Endothelial cell of umbilical vein (primary cell): ENCODE measurements at regions of chr7 and their contacts with region 1.

Region 1: GRCh38 chr7:7640221-7641128 is at the start of gene UMAD1:
- DNase-seq: peak; percentile 98
- H3K4me3 ChIP-seq: peak within 1 kb of the TSS; percentile 66 to 93 (median 79)
- H3K27ac ChIP-seq: peak within 1 kb of the TSS; percentile 21
- H3K4me1 ChIP-seq: peaks cover 8% of the 10 kb centered on the region
- H3K27me3 ChIP-seq: no peaks in the 10 kb centered on the region
- CTCF ChIP-seq: no peak
- POLR2A ChIP-seq: peak; percentile 78
- total RNA-seq, gene UMAD1: 6.1 and 6.6 TPM in 2 replicates

Region 2: GRCh38 chr7:7566651-7567611 is 73.5 kb before region 1 on chr7 and contains the start of gene MIOS:
- CTCF ChIA-PET with region 1: no interaction called
- POLR2A ChIA-PET with region 1: no interaction called
- dilution Hi-C with region 1: no loop called
- intact Hi-C with region 1: loop called (anchors 1 kb)
- DNase-seq: peak; percentile 75
- H3K4me3 ChIP-seq: peak within 1 kb of the TSS; percentile 86 to 95 (median 91)
- H3K27ac ChIP-seq: peak within 1 kb of the TSS; percentile 85
- H3K4me1 ChIP-seq: peaks cover 10% of the 10 kb centered on the region
- H3K27me3 ChIP-seq: no peaks in the 10 kb centered on the region
- CTCF ChIP-seq: no peak
- POLR2A ChIP-seq: peak; percentile 72
- total RNA-seq, gene MIOS: 16.0 and 16.8 TPM in 2 replicates

Region 3: DNA sequence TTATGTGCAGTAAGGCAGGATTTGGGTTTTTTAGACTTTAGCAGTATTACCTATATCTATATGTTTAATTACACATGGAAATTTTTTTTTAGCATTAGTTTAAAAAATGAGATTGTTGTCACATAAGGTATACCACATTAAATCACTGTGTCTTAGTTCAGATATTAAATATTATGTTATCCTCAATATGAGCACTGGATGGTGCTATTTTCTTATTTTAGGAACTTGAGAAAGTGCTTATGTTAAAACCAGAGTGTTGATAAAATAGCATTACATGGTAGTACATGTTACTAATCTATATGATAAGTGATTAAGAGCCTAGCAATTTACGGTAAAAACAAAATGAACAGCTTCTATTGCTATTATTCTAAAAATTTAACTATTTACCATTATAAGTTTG is 45.0 kb before region 1 on chr7:
- CTCF ChIA-PET with region 1: no interaction called
- POLR2A ChIA-PET with region 1: no interaction called
- dilution Hi-C with region 1: no loop called
- intact Hi-C with region 1: loop called (anchors 5 kb)
- DNase-seq: peak; percentile 41
- H3K4me3 ChIP-seq: no peak overlapping the region
- H3K27ac ChIP-seq: no peak overlapping the region
- H3K4me1 ChIP-seq: no peaks in the 10 kb centered on the region
- H3K27me3 ChIP-seq: no peaks in the 10 kb centered on the region
- CTCF ChIP-seq: no peak
- POLR2A ChIP-seq: no peak

Region 4: GRCh38 chr7:8261711-8262695 is 621.5 kb after region 1 on chr7 and contains the start of gene ICA1:
- CTCF ChIA-PET with region 1: no interaction called
- POLR2A ChIA-PET with region 1: no interaction called
- dilution Hi-C with region 1: no loop called
- intact Hi-C with region 1: loop called (anchors 1 kb)
- DNase-seq: peak; percentile 72
- H3K4me3 ChIP-seq: peak within 1 kb of the TSS; percentile 84 to 96 (median 96)
- H3K27ac ChIP-seq: peak within 1 kb of the TSS; percentile 94
- H3K4me1 ChIP-seq: peaks cover 7% of the 10 kb centered on the region
- H3K27me3 ChIP-seq: no peaks in the 10 kb centered on the region
- CTCF ChIP-seq: peak in 1 of 2 donors; percentile 4
- POLR2A ChIP-seq: peak; percentile 65
- total RNA-seq, gene ICA1: 39.7 and 47.1 TPM in 2 replicates